Right ventricle myocardium inferior (tissue), 1 donor: ENCODE measurements at regions of chr14 and their contacts with region 1.

Region 1: DNA sequence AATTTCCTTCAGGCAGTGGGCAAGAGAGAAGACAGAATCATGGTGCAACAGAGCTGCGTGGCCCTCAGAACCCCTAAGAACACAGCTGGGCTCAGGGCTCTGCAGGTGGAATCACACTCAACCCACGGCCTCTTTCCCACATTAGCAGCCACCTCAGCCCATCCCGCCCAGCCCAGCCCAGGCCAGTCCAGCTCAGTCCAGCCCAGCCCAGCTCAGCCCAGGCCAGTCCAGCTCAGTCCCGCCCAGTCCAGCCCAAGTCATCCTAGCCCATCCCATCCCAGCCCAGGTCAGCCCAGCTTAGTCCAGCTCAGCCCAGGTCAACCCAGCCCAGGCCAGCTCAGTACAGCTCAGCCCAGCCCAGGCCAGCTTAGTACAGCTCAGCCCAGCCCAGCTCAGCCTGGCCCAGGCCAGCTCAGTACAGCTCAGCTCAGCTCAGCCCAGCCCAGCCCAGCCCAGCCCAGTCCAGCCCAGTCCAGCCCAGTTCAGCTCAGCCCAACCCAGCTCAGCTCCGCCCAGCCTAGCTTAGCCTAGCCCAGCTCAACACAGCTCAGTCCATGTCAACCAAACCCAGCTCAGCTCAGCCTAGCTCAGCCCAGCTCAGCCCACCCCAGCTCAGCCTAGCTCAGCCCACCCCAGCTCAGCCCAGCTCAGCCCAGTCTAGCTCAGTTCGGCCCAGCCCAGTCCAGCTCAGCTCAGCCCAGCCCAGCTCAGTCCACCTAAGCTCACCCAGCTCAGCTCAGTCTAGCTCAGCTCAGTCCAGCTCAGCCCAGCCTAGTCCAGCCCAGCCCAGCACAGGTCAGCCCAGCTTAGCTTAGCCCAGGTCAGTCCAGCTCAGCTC is 183.1 kb downstream of the TMEM121 start:
- DNase-seq: peak; percentile 64
- ATAC-seq: no peak

Region 2: DNA sequence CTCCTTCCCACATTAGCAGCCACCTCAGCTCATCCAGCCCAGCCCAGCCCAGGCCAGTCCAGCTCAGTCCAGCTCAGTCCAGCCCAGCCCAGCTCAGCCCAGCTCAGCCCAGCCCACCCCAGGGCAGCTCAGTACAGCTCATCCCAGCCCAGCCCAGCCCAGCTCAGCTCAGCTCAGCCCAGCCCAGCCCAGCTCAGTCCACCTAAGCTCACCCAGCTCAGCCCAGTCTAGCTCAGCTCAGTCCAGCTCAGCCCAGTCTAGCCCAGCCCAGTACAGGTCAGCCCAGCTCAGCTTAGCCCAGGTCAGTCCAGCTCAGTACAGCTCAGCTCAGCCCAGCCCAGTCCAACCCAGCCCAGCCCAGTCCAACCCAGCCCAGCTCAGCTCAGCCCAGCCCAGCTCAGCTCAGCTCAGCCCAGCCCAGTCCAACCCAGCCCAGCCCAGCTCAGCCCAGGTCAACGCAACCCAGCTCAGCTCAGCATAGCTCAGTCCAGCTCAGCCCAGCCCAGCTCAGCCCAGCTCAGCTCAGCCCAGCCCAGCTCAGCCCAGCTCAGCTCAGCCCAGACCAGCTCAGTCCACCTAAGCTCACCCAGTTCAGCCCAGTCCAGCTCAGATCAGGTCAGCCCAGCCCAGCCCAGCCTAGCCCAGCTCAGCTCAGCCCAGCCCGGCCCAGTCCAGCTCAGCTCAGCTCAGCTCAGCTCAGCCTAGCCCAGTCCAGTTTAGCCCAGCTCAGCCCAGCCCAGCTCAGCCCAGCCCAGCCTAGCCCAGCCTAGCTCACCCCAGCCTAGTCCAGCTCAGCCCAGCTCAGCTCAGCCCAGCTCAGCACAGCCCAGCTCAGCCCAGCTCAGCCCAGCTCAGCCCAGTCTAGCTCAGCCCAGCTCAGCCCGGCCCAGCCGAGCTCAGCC is 120.1 kb before region 1 on chr14:
- intact Hi-C with region 1: loop called (anchors 5 kb)
- DNase-seq: no peak
- ATAC-seq: no peak